Common myeloid progenitor, CD34-positive (primary cell): ENCODE measurements at regions of chr4 and their contacts with region 1.

Region 1: GRCh38 chr4:57426779-57427395 is 316.7 kb upstream of the IGFBP7 start:
- DNase-seq: peak; percentile 63 to 77 (median 75)
- H3K4me3 ChIP-seq: no peak overlapping the region
- H3K27ac ChIP-seq: no peak overlapping the region
- H3K4me1 ChIP-seq: no peaks in the 10 kb centered on the region
- H3K27me3 ChIP-seq: peaks cover 0 to 4% (median 0%) of the 10 kb centered on the region in 5 experiments

Region 2: GRCh38 chr4:57410331-57411052 is 16.4 kb before region 1 on chr4:
- CTCF ChIA-PET with region 1: interaction called, 19 read pairs
- POLR2A ChIA-PET with region 1: no interaction called
- DNase-seq: no peak
- H3K4me3 ChIP-seq: no peak overlapping the region
- H3K27ac ChIP-seq: no peak overlapping the region
- H3K4me1 ChIP-seq: no peaks in the 10 kb centered on the region
- H3K27me3 ChIP-seq: peaks cover 0 to 2% (median 0%) of the 10 kb centered on the region in 5 experiments

Region 3: GRCh38 chr4:57442241-57442640 is 15.4 kb after region 1 on chr4:
- CTCF ChIA-PET with region 1: interaction called, 10 read pairs
- POLR2A ChIA-PET with region 1: no interaction called
- DNase-seq: no peak
- H3K4me3 ChIP-seq: no peak overlapping the region
- H3K27ac ChIP-seq: no peak overlapping the region
- H3K4me1 ChIP-seq: no peaks in the 10 kb centered on the region
- H3K27me3 ChIP-seq: peaks cover 0 to 3% (median 0%) of the 10 kb centered on the region in 5 experiments

Region 4: DNA sequence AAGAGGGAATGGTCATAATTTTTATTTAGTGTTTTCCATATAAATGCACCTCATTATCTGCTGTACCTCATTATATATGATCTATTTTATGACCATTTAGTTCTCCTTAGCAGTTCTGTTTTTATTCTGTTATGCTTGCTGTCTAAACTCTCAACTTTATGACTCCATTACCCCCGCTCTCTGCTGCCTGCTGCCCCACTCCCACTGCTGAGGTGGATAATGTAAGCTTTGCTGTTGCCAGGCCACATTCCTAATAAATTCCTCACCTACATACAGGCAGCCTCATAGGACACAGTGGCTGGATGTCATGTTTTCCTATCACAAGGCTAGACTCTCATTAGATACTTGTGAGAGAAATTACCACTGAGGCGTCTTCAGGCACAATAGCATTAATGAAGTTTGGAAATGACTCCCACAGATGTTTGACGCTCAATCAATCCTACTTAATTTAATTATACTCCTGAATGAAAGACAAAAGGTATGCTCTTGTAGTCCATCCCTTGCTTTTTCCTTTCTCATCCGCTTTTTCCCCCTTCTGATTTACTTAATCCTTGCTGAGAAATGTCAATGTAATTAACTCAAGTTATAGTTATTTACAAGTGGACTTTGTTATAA is 180.8 kb after region 1 on chr4:
- CTCF ChIA-PET with region 1: no interaction called
- POLR2A ChIA-PET with region 1: no interaction called
- DNase-seq: no peak
- H3K4me3 ChIP-seq: no peak overlapping the region
- H3K27ac ChIP-seq: no peak overlapping the region
- H3K4me1 ChIP-seq: no peaks in the 10 kb centered on the region
- H3K27me3 ChIP-seq: no peaks in the 10 kb centered on the region